HCT116 (cell line): ENCODE measurements at regions of chr11 and their contacts with region 1.

Region 1: DNA sequence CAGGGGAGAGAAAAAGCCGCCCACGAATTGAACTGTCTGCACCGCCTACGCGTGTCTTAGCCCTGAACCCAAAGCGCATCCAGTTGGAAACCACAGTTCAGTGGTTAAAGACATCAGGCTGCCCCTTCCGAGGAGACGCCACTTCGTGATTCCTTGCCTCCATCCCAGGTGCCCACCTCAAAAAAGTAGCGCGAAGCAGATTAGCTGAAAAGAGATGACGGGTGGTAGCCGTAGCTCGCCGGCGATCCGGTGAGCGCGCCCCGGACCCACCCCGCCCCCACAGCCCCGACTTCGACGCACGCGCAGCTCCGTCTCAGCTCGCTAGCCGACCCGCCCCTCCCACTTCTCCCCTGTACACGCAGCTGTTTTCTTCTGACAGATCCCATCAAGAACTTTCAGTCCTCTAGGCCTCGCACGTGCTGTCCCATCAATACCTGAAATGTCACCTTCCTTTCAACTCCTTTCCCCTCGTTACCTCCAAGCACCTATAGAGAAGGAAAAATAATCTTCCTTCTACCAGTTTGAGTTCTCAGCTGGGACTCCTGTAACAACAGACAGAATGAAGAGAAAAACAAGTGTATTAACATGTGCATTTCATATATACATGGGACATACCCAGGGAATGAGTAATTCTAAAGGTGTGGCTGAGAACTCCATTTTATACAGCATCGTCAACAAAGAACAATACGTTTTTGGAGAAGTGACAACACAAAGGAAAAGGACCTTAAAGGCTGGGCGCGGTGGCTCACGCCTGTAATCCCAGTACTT is 49.5 kb downstream of the OR4D9 start:
- DNase-seq: peak; percentile 83
- ATAC-seq: peak; percentile 37
- H3K4me3 ChIP-seq: peak overlapping the region; percentile 54 to 58
- H3K27ac ChIP-seq: peak overlapping the region; percentile 65
- H3K4me1 ChIP-seq: peaks cover 37 to 87% of the 10 kb centered on the region in 2 experiments
- H3K27me3 ChIP-seq: no peaks in the 10 kb centered on the region
- CTCF ChIP-seq: no peak
- POLR2A ChIP-seq: no peak
- RAD21 ChIP-seq: no peak

Region 2: DNA sequence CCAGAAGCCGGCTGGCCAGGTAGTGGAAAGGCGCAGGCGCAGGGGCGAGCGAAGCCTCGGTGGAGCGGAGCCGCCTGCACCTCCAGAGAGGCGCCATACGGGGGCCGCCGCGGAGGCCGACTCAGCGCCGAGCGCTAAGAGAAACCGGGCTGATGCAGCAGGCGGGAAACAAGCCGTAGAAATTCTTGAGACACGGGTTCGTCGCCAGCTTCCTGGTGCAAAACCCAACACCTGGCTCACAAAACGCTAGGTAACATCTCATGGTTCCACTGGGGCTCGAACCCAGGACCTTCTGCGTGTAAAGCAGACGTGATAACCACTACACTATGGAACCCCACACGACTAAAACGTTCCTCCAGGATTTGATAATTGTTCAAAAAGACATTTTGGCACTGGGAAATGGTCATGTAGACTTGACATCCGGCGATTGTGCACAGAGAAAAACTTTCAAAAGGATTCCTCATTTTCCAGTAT is 10.5 kb before region 1 on chr11:
- CTCF ChIA-PET with region 1: interaction called, 3 read pairs
- POLR2A ChIA-PET with region 1: interaction called, 17 read pairs
- RAD21 ChIA-PET with region 1: interaction called in 1 of 2 experiments, 7 read pairs
- intact Hi-C with region 1: loop called (anchors 1 kb)
- DNase-seq: peak; percentile 96
- ATAC-seq: peak; percentile 88
- H3K4me3 ChIP-seq: peak overlapping the region; percentile 8 to 40; a peak in 3 of 4 replicates
- H3K27ac ChIP-seq: peak overlapping the region; percentile 74
- H3K4me1 ChIP-seq: peaks cover 44 to 65% of the 10 kb centered on the region in 2 experiments
- H3K27me3 ChIP-seq: no peaks in the 10 kb centered on the region
- CTCF ChIP-seq: peak in 2 of 3 experiments; percentile 22 to 38; a peak in 2 of 6 replicates
- POLR2A ChIP-seq: no peak
- RAD21 ChIP-seq: no peak; the same call in 1 of the 2 replicates

Region 3: GRCh38 chr11:59615637-59616395 is 54.9 kb after region 1 on chr11 and contains the start of gene OSBP:
- CTCF ChIA-PET with region 1: interaction called, 3 read pairs
- POLR2A ChIA-PET with region 1: interaction called, 7 read pairs
- RAD21 ChIA-PET with region 1: no interaction called
- intact Hi-C with region 1: loop called (anchors 5 kb)
- DNase-seq: peak; percentile 100
- ATAC-seq: peak; percentile 89
- H3K4me3 ChIP-seq: peak within 1 kb of the TSS; percentile 91 to 95
- H3K27ac ChIP-seq: peak within 1 kb of the TSS; percentile 81
- H3K4me1 ChIP-seq: peaks cover 16 to 35% of the 10 kb centered on the region in 2 experiments
- H3K27me3 ChIP-seq: no peaks in the 10 kb centered on the region
- CTCF ChIP-seq: no peak
- POLR2A ChIP-seq: no peak
- RAD21 ChIP-seq: no peak
- total RNA-seq, gene OSBP: 43.8 TPM